ENCODE measurements at regions of chr3 and their contacts with region 1.

Region 1: DNA sequence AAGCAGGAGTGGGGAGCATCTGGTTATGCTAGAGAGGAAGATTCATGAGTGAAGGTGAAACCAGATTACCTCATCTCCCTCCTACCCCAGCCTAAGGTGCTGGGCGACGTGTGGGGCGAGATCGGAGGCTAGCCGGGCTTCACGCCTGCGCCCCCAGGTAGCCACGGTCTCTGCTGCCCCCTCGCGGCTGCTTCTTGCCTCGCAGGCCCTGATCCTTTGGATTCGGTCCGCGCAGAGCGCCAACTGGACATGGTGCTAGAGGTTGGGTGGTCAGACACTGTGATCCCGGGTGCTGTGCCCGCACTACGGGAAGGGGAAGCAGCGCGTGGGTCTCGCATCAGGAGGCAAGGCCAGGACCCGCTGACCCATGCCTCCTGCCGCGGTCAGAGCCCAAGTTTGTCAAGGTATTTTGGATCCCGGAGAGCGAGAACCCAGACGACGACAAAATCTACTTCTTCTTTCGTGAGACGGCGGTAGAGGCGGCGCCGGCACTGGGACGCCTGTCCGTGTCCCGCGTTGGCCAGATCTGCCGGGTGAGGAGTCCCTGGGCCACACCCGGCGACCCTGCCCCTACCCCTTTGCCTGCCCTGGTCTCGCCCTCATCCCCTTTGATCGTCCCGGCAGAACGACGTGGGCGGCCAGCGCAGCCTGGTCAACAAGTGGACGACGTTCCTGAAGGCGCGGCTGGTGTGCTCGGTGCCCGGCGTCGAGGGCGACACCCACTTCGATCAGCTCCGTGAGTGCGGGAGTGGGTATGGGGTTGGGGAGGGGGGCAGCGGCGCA is 4.2 kb downstream of the SEMA3B start:
- DNase-seq: peak; percentile 91
- ATAC-seq: peak; percentile 98
- H3K4me3 ChIP-seq: peak overlapping the region in 3 of 5 experiments; percentile 8 to 48 (median 30)
- H3K4me3 Mint-ChIP-seq: peak overlapping the region; percentile 82
- H3K27ac ChIP-seq: no peak overlapping the region
- H3K27ac Mint-ChIP-seq: peak overlapping the region; percentile 81
- H3K4me1 ChIP-seq: peaks cover 33 to 39% of the 10 kb centered on the region in 2 donors
- H3K4me1 Mint-ChIP-seq: peaks cover 26% of the 10 kb centered on the region
- H3K27me3 ChIP-seq: peaks cover 0 to 53% (median 21%) of the 10 kb centered on the region in 4 experiments
- H3K27me3 Mint-ChIP-seq: peaks cover 36% of the 10 kb centered on the region
- CTCF ChIP-seq: peak; percentile 97

Region 2: DNA sequence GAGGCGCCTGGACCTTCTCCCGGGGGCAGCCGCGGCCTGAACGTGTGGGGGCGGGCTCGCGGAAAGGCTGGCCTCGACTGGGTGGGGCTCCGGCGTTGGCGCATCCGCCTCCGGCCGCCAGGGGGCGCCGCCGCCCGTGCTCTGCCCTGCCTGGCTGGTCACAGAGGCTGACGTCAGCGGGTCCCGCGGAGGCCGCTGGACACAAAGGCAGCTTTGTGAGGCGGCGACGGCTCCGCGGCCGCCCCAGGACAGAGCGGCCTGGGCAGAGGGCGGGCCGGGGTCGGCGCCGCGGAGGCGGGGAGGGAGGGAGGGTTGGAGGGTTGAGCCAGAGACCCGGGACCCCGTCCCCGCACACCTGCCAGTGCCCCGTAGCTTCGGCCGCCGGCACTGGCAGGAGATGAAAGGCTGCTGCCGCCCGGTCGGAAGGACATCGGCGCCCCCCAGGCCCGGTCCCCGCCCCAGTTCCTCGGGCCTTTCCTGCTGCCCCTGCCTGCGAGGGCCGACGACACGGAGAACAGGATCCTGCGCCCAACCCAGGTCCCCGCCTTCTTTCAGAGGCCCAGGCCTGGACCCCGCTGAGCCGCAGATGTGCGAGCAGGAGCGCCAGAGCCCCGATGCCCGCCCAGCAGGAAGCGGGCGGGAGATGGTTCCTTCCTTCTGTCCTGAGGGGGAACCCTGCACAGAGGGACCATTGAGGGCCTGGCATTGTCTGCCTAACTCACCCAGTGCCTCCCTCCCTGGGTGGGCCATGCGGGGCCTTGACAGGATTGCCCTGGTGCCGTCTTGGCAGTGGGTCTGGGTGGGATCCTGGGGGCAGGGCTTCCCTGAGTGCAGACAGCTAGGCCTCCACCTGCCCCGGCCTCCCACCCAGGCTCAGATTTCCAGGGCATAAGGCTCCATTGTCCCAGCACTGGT is 12.8 kb before region 1 on chr3:
- CTCF ChIA-PET with region 1: interaction called, 10 read pairs
- POLR2A ChIA-PET with region 1: no interaction called
- intact Hi-C with region 1: loop called (anchors 1 kb)
- DNase-seq: peak; percentile 90
- ATAC-seq: peak; percentile 93
- H3K4me3 ChIP-seq: peak overlapping the region in 4 of 5 experiments; percentile 48 to 58 (median 54)
- H3K4me3 Mint-ChIP-seq: peak overlapping the region; percentile 77
- H3K27ac ChIP-seq: peak overlapping the region; percentile 44 to 79
- H3K27ac Mint-ChIP-seq: peak overlapping the region; percentile 80
- H3K4me1 ChIP-seq: peaks cover 12 to 17% of the 10 kb centered on the region in 2 donors
- H3K4me1 Mint-ChIP-seq: peaks cover 12% of the 10 kb centered on the region
- H3K27me3 ChIP-seq: peaks cover 0 to 5% (median 0%) of the 10 kb centered on the region in 4 experiments
- H3K27me3 Mint-ChIP-seq: no peaks in the 10 kb centered on the region
- CTCF ChIP-seq: peak; percentile 93

Measured in B cell (primary cell).